ENCODE measurements at regions of chr22 and their contacts with region 1.

Region 1: DNA sequence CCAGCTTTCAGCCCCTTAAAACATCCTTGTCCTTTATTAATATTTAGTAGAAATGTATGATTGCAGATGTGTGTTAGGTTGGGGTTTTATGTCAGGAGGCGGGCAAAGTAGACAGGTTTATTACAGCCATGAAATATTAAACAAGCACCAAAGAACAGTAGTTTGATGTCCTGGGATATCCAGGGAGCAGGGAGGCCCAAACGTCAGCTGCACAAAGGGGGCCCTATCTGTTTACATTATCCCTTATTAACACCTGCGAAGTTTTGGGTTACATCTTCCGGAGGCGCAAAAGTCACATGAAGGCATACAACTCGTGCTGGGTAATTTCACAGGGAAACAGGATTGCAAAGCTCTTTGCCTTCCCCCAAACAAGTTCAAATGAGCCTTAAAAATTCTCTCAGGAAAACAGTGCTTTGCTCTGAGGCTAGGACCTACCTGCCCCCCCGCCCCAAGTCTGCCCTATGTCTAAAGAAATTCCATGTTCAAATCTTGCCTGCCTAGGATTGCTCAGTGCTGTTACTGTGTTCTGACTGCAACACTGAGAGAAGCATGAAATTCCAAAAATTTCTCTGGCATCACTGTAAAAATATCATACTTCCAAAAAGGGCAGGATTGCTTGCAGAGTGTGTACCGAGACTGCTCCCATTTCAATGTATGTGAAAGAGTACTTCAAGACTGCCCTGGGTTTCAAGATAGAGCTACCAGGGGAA is 8.9 kb downstream of the MN1 start:
- DNase-seq: no peak
- H3K4me3 ChIP-seq: no peak overlapping the region
- H3K27ac ChIP-seq: peak overlapping the region in 1 of 2 donors; percentile 11
- H3K4me1 ChIP-seq: peaks cover 3% of the 10 kb centered on the region
- H3K27me3 ChIP-seq: no peaks in the 10 kb centered on the region
- CTCF ChIP-seq: no peak
- POLR2A ChIP-seq: no peak

Region 2: DNA sequence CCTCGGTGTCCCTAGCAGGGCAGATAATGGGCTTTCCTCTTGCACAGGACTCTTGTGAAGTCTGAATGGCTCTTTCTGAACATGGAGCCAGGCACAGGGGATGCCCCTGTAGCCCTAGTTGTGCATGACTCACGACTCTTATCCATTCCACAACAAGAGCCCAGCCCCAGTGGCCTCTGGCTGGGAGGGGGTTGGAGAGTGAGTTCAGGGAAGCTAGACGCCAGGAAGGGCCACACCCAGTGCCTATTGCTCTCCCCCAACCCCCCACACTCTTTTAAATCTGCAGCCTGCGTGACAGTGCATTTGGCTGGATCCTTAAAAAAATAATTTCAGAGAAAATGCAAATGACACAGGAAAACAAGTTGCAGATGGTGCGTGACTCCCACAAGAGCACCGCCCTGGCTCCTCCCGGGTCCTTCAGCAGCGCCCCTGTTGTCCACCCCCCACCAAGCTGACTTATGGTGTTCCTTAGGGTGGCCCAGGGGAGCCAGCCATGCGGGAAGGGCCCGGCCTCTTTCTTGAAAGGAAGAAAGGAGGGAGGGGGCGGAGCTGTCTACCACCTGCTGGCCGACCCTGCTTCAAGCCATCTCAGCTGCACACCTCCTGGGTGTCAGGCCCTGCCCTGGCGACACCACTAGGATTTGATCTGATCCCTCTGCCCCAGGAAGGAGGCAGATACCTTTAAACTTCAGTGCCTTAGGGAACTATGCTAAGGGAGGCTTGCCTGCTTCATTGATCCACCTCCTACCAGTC is 65.7 kb before region 1 on chr22:
- intact Hi-C with region 1: no loop called
- DNase-seq: no peak
- H3K4me3 ChIP-seq: no peak overlapping the region
- H3K27ac ChIP-seq: no peak overlapping the region
- H3K4me1 ChIP-seq: no peaks in the 10 kb centered on the region
- H3K27me3 ChIP-seq: no peaks in the 10 kb centered on the region
- CTCF ChIP-seq: no peak
- POLR2A ChIP-seq: no peak

Region 3: GRCh38 chr22:27772988-27773498 is 19.6 kb before region 1 on chr22:
- intact Hi-C with region 1: loop called (anchors 1 kb)
- DNase-seq: no peak
- H3K4me3 ChIP-seq: no peak overlapping the region
- H3K27ac ChIP-seq: no peak overlapping the region
- H3K4me1 ChIP-seq: no peaks in the 10 kb centered on the region
- H3K27me3 ChIP-seq: no peaks in the 10 kb centered on the region
- CTCF ChIP-seq: no peak
- POLR2A ChIP-seq: no peak

Region 4: DNA sequence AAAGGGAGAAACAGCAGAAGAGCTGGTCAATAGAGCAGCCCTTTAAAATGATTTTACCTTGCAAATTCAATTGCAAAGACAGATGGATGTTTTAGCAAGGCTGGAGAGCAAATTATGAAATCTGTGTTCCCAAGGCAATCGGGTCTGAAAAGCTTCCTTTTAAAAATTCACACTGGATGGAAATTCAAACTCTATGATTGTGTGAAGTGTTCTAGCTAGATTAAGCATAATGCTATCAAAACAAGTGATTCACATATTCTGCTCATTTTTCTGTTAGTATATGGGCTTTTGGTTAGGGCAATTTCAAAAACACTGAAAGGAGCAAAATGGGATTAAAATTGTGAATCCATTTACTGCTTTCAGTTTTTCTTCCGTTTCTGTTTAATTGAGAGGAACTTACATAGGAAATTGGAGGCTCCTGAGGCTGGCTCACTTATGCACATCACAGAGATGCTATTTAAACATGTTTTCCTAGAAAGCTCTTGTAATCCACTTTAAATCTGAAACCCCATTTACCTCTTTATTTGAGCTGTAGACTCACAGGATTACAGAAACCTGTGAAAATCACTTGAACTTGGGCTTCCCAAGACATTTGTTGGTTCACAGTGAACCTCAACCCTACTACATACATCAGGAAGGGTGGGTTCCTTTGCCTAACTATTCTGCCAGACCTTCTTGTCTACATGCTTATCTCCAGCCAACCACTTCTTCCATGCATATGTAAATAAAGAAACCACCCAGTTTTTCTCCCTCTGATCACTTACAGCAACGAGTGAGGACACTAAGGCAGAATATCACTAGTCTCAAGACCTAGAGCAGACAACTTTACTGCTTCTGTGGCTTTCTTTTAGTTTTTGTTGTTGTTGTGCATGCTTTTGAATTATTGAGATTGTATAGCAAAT is 328.3 kb after region 1 on chr22:
- intact Hi-C with region 1: no loop called
- DNase-seq: no peak
- H3K4me3 ChIP-seq: no peak overlapping the region
- H3K27ac ChIP-seq: no peak overlapping the region
- H3K4me1 ChIP-seq: no peaks in the 10 kb centered on the region
- H3K27me3 ChIP-seq: no peaks in the 10 kb centered on the region
- CTCF ChIP-seq: no peak
- POLR2A ChIP-seq: no peak

Measured in prostate gland (tissue), 2 donors.